MCF 10A (cell line): ENCODE measurements at regions of chr1 and their contacts with region 1.

Region 1: GRCh38 chr1:41516168-41517061 is 31.9 kb upstream of the EDN2 start:
- DNase-seq: peak; percentile 84
- H3K4me3 Mint-ChIP-seq: peak overlapping the region; percentile 32
- H3K27ac Mint-ChIP-seq: no peak overlapping the region
- H3K4me1 Mint-ChIP-seq: peaks cover 21% of the 10 kb centered on the region
- H3K27me3 Mint-ChIP-seq: no peaks in the 10 kb centered on the region
- CTCF ChIP-seq: peak; percentile 84

Region 2: DNA sequence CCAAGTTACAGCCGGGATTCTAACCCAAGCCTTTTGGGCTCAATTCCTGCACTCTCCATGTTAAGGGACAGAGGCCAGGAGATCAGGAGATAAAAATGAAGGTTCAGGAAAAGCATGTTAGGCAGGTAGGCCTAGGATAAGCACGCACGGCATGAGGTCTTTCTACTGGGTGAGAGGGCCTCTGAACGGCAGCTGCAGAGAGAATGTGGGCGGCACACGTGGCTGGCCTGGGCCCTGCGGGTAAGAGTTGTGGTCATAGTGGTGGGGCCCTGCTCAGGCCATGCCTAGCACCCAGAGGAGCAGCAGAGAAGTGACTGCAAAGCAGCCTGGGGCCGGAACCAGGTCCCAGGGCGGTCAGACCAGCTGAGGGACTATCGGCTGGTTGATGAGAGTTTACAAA is 162.7 kb before region 1 on chr1:
- CTCF ChIA-PET with region 1: no interaction called
- POLR2A ChIA-PET with region 1: no interaction called
- intact Hi-C with region 1: no loop called
- DNase-seq: no peak
- H3K4me3 Mint-ChIP-seq: no peak overlapping the region
- H3K27ac Mint-ChIP-seq: no peak overlapping the region
- H3K4me1 Mint-ChIP-seq: peaks cover 12% of the 10 kb centered on the region
- H3K27me3 Mint-ChIP-seq: no peaks in the 10 kb centered on the region
- CTCF ChIP-seq: no peak

Region 3: DNA sequence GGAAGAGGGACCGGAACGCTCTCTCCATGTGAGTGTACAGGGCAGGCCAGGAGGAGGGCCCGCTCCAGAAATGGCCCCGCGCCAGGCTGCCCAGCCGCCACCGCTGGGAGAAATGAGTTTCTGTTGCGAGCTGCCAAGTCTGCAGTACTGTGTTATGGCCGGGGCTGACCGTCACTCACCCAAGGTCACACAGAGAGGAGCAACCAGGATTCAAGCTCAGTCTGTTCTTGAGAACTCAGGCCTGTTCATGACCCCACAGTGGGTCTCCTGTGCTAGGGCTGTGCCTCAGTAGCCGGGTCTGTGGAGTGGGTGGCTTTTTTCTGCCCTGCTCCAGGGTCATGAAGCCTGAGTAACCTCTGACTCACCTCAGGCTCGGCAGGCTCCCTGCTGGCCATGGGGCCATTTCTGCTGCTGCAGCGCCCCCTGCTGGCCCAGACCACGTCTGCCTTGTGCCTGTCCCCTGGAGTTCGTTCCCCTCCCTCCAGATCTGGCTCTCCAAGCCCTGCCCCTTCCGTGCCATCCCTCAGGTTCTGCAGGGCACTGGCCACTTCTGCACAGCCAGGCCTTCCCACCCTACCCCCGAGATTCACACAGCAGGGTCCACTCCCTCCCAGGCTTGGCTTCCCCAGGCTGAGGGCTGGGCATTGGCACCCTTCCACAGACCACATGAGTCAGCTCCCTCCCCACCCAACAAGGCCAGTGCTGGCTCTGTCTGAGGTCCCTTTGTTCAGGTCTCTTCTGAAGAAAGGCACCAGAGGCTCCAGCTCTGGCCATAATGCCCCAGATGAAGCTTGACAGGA is 83.7 kb before region 1 on chr1:
- CTCF ChIA-PET with region 1: interaction called, 7 read pairs
- POLR2A ChIA-PET with region 1: interaction called, 4 read pairs
- intact Hi-C with region 1: loop called (anchors 1 kb)
- DNase-seq: peak; percentile 91
- H3K4me3 Mint-ChIP-seq: peak overlapping the region; percentile 54
- H3K27ac Mint-ChIP-seq: no peak overlapping the region
- H3K4me1 Mint-ChIP-seq: peaks cover 29% of the 10 kb centered on the region
- H3K27me3 Mint-ChIP-seq: no peaks in the 10 kb centered on the region
- CTCF ChIP-seq: peak; percentile 94

Region 4: GRCh38 chr1:41484372-41485241 is 31.8 kb before region 1 on chr1 and contains the start of gene EDN2:
- CTCF ChIA-PET with region 1: interaction called, 12 read pairs
- POLR2A ChIA-PET with region 1: interaction called, 7 read pairs
- intact Hi-C with region 1: loop called (anchors 5 kb)
- DNase-seq: peak; percentile 87
- H3K4me3 Mint-ChIP-seq: peak within 1 kb of the TSS; percentile 71
- H3K27ac Mint-ChIP-seq: peak within 1 kb of the TSS; percentile 54
- H3K4me1 Mint-ChIP-seq: peaks cover 40% of the 10 kb centered on the region
- H3K27me3 Mint-ChIP-seq: no peaks in the 10 kb centered on the region
- CTCF ChIP-seq: no peak
- total RNA-seq, gene EDN2: 0.58 and 0.66 TPM in 2 replicates

Region 5: DNA sequence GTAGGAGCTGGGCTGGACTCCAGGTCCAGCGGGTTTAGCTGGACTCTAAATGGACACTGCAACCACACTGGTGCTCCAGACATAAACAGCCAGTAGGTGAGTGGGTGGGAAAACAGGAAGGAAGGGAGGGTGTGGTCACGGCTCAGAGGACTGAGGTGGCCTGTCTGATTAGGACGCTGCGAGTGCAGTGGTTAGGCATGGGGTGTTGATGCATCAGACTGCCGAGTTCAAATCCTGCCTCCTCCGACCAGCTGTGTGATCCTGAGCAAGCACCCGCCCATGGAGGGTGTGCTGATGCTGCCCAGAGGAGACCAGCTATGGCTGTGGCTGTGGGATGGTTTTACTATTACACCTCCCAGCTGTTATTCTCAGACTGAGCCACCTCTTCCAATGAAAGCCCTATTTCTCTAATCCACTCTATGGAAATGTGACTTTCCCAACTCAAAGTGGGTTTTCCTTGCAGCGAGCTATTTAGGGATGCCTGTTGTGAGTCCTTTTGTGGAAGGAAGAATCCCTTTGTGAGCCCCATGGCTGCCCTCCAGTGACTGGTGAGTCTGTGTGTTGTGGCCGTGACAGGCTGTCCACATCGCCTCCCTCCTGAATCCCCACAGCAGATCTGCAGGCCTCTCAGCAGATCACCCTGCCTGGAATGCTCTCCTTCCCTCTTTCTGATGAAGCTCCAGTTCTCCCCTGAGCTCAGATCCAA is 24.6 kb after region 1 on chr1:
- CTCF ChIA-PET with region 1: interaction called, 24 read pairs
- POLR2A ChIA-PET with region 1: no interaction called
- intact Hi-C with region 1: no loop called
- DNase-seq: no peak
- H3K4me3 Mint-ChIP-seq: no peak overlapping the region
- H3K27ac Mint-ChIP-seq: no peak overlapping the region
- H3K4me1 Mint-ChIP-seq: peaks cover 6% of the 10 kb centered on the region
- H3K27me3 Mint-ChIP-seq: no peaks in the 10 kb centered on the region
- CTCF ChIP-seq: no peak

Region 6: GRCh38 chr1:41795205-41795762 is 278.9 kb after region 1 on chr1:
- CTCF ChIA-PET with region 1: interaction called, 4 read pairs
- POLR2A ChIA-PET with region 1: no interaction called
- intact Hi-C with region 1: loop called (anchors 1 kb)
- DNase-seq: peak; percentile 70
- H3K4me3 Mint-ChIP-seq: no peak overlapping the region
- H3K27ac Mint-ChIP-seq: no peak overlapping the region
- H3K4me1 Mint-ChIP-seq: no peaks in the 10 kb centered on the region
- H3K27me3 Mint-ChIP-seq: peaks cover 18% of the 10 kb centered on the region
- CTCF ChIP-seq: peak; percentile 46